ENCODE measurements at regions of chr3 and their contacts with region 1.

Region 1: DNA sequence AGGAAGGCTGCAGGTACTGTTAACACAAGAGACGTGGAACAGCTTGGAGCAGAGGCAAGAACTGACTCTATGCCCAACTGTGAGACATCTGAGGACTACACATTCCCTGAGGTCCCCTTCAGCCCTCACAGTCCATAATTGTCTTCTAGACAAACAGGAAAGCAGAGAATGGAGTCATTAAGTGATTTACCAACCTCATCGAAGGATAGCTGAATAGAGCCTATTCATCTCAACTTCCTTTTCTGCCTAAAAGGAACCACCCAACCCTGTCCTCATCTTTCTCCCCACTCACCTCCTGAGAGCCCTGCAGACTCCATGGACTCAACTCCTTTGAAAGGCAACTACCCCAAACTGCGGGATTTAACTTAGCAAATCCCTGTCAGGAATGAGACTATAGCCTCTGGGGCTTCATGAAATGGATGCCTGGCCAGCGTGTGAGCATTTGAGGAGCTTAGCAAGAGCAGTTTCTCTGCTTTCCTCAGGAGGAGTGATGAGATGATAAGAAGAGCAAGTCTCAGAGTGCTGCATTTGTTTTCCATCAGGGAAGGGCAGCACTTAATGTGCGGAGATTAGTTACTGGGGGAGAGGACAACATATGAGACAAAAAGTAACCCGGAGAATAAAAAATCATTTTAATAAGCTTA is 61.5 kb upstream of the FILIP1L start:
- DNase-seq: no peak
- ATAC-seq: peak in 2 of 4 donors; percentile 59 to 63
- H3K4me3 ChIP-seq: no peak overlapping the region
- H3K27ac ChIP-seq: peak overlapping the region in 4 of 12 donors; percentile 3 to 52 (median 26)
- H3K4me1 ChIP-seq: peaks cover 0 to 20% (median 3%) of the 10 kb centered on the region in 12 donors
- H3K27me3 ChIP-seq: no peaks in the 10 kb centered on the region
- CTCF ChIP-seq: no peak
- POLR2A ChIP-seq: no peak

Region 2: DNA sequence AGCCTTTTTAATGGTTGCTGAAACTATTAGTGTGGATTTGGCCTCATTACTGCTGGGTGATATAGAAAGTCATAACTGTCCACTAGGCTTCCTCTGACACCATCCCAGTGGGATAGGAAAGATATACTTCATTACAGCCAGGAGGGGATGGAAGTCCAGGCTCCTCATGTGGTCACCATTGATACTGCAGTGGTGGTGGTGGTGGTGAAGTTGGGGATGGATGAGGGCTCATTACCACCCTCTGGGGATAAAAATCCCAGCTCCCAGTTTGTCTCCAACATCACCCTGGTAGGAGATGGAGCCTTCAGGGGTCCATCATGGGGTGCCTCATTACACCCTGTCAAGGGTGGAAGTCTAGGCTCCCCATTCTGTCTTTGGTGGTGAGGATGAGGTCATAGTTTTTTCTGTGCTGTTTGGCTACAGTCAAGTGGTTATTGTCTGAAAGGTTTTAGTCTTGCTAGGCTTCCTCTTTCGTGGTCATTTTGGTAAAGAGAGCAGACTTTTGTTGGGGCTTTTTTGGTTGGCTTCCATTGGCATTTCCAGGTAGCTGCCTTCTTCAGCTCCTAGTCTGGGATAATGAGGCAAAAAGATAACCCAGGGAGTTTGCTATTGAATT is 31.4 kb before region 1 on chr3:
- intact Hi-C with region 1: no loop called
- DNase-seq: no peak
- ATAC-seq: no peak
- H3K4me3 ChIP-seq: no peak overlapping the region
- H3K27ac ChIP-seq: no peak overlapping the region
- H3K4me1 ChIP-seq: peaks cover 0 to 3% (median under 1%) of the 10 kb centered on the region in 12 donors
- H3K27me3 ChIP-seq: no peaks in the 10 kb centered on the region
- CTCF ChIP-seq: no peak
- POLR2A ChIP-seq: no peak

Region 3: DNA sequence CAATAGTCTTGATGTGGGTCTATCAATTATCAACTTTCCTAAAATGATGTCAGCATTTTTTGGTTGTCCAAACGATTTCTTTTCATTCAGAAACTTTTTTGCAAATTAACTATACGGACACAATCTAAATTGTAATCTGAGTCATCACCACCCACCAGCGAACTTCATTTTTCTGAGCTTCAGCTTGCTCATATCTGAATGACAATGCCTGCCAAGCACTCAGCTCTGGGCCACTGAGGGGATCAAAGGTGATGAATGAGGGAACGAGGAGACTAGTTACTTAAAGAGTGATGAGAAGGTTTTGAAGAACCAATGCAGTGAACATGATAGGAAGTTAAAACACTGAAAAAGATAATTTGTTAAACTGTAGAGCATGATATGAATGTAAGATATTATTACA is 70.2 kb after region 1 on chr3:
- intact Hi-C with region 1: loop called in 1 of 10 experiments (anchors 10 kb)
- DNase-seq: no peak
- ATAC-seq: no peak
- H3K4me3 ChIP-seq: no peak overlapping the region
- H3K27ac ChIP-seq: no peak overlapping the region
- H3K4me1 ChIP-seq: no peaks in the 10 kb centered on the region
- H3K27me3 ChIP-seq: no peaks in the 10 kb centered on the region
- CTCF ChIP-seq: no peak
- POLR2A ChIP-seq: no peak

Region 4: DNA sequence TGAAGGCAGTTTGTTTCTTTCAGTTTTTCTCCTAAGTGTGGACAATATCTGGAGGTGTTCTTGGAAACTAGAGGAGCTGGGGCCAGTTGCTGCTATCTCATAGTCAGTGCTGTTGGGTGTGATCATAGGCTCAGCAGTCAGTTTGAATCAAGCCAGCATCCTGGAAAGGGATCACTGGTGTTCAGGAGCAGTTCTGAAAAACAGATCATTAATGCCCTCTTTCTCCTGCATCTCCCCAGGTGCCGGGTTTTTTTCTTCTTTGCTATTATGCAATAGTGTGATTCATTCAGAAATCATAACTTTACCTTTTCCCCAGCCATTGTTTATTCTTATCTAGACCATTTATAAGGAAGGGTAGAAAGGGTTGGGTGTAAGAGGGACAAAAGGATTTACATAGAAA is 249.6 kb after region 1 on chr3:
- intact Hi-C with region 1: no loop called
- DNase-seq: no peak
- ATAC-seq: no peak
- H3K4me3 ChIP-seq: no peak overlapping the region
- H3K27ac ChIP-seq: no peak overlapping the region
- H3K4me1 ChIP-seq: peaks cover 0 to 39% (median 0%) of the 10 kb centered on the region in 12 donors
- H3K27me3 ChIP-seq: no peaks in the 10 kb centered on the region
- CTCF ChIP-seq: no peak
- POLR2A ChIP-seq: no peak

Measured in heart left ventricle (tissue), 16 donors.